MCF 10A (cell line): ENCODE measurements at regions of chr17 and their contacts with region 1.

Region 1: GRCh38 chr17:7646457-7646856 is 4.3 kb upstream of the ATP1B2 start:
- DNase-seq: no peak
- H3K4me3 Mint-ChIP-seq: no peak overlapping the region
- H3K27ac Mint-ChIP-seq: no peak overlapping the region
- H3K4me1 Mint-ChIP-seq: peaks cover 21% of the 10 kb centered on the region
- H3K27me3 Mint-ChIP-seq: peaks cover 19% of the 10 kb centered on the region
- CTCF ChIP-seq: no peak

Region 2: DNA sequence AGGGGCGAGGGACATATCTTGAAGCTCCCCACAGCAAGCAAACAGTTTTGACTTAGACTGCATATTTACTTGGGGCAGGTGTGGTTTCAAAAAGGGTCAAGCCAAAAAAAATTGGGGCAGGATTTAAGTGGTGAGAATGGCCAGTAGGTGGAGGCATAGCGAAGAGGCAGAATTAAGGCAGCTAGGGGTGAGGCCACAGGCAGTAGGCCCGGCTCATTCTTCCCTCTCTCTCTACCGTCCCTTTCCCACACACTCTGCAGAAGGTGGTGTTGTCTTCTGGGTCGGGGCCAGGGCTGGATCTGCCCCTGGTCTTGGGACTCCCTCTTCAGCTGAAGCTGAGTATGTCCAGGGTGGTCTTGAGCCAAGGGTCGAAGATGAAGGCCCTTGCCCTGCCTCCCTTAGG is 14.0 kb before region 1 on chr17:
- CTCF ChIA-PET with region 1: interaction called, 18 read pairs
- POLR2A ChIA-PET with region 1: interaction called, 4 read pairs
- intact Hi-C with region 1: no loop called
- DNase-seq: peak; percentile 69
- H3K4me3 Mint-ChIP-seq: no peak overlapping the region
- H3K27ac Mint-ChIP-seq: no peak overlapping the region
- H3K4me1 Mint-ChIP-seq: no peaks in the 10 kb centered on the region
- H3K27me3 Mint-ChIP-seq: no peaks in the 10 kb centered on the region
- CTCF ChIP-seq: peak; percentile 63

Region 3: DNA sequence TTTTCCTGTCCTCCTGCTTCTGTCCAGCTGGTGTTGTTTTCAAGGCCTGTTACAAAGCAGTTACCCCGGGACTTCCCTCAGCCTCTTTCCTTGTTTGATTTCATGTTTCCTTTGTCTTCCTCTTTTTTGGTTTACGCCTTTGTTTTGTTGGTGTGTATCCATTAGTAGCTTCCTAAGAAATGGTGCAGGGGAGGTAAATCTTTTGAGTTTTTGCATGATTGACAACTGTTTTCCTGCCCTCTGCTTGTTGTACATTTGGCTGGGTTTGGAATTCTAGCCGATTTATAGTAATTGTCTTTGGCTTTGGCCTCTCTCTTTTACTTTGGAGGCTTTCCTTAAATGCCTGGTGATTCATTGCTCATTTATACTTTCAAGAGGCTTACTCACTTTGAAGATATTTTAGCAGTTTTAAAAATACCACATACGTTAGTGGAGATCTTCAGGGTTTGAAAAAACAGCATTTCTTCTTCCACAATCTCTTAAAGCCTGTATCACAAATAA is 103.9 kb after region 1 on chr17:
- CTCF ChIA-PET with region 1: no interaction called
- POLR2A ChIA-PET with region 1: no interaction called
- intact Hi-C with region 1: no loop called
- DNase-seq: peak; percentile 47
- H3K4me3 Mint-ChIP-seq: no peak overlapping the region
- H3K27ac Mint-ChIP-seq: peak overlapping the region; percentile 39
- H3K4me1 Mint-ChIP-seq: peaks cover 18% of the 10 kb centered on the region
- H3K27me3 Mint-ChIP-seq: no peaks in the 10 kb centered on the region
- CTCF ChIP-seq: no peak